BJ (cell line): ENCODE measurements at regions of chr5 and their contacts with region 1.

Region 1: GRCh38 chr5:83145882-83146331 is 68.6 kb downstream of the XRCC4 start:
- DNase-seq: no peak
- H3K4me3 ChIP-seq: no peak overlapping the region
- H3K27me3 ChIP-seq: no peaks in the 10 kb centered on the region
- CTCF ChIP-seq: no peak

Region 2: DNA sequence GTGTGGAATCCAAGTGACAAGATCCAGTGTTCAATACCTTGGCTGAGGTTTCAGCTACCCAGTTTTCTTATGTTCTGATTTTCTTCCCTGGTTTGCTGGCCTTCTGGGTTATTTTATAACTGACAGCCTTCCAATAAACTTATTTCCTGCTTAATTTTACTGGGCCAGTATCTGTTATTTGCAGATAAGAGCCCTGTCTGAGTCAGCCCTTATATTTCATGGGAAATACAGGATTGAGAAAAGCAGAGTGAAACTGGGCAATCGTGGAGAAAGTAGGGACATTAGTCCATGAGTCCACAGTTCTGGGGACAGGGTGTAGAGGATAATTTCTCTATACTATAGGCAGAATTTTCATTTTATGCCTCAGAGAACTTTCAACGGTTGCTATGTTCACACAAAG is 101.0 kb before region 1 on chr5:
- CTCF ChIA-PET with region 1: no interaction called
- POLR2A ChIA-PET with region 1: no interaction called
- DNase-seq: no peak
- H3K4me3 ChIP-seq: no peak overlapping the region
- H3K27me3 ChIP-seq: no peaks in the 10 kb centered on the region
- CTCF ChIP-seq: no peak

Region 3: DNA sequence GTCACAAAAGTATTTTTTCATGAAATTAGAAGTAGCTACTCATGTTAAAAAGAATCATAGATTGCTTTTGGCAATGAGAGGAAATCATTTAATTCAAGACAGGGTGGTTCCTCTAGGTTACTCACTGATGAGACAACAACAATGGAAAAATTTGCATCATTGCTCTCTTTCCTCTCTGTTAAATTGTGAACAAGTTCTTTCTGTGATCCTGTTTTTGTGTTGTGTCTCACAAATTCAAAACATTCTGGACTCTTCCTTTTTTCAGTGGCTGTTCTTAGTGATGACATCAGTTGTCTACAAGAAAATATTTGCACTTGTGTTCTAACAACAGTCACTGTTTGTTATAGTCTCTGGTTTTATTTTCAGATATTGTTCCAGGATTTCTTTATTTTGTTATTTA is 26.7 kb after region 1 on chr5:
- CTCF ChIA-PET with region 1: no interaction called
- POLR2A ChIA-PET with region 1: no interaction called
- DNase-seq: no peak
- H3K4me3 ChIP-seq: no peak overlapping the region
- H3K27me3 ChIP-seq: no peaks in the 10 kb centered on the region
- CTCF ChIP-seq: no peak

Region 4: GRCh38 chr5:83470920-83471404 is 325.1 kb after region 1 on chr5:
- CTCF ChIA-PET with region 1: no interaction called
- POLR2A ChIA-PET with region 1: interaction called, 11 read pairs
- DNase-seq: no peak
- H3K4me3 ChIP-seq: peak overlapping the region; percentile 59
- H3K27me3 ChIP-seq: peaks cover 10% of the 10 kb centered on the region
- CTCF ChIP-seq: no peak